ENCODE measurements at regions of chr5 and their contacts with region 1.

Region 1: DNA sequence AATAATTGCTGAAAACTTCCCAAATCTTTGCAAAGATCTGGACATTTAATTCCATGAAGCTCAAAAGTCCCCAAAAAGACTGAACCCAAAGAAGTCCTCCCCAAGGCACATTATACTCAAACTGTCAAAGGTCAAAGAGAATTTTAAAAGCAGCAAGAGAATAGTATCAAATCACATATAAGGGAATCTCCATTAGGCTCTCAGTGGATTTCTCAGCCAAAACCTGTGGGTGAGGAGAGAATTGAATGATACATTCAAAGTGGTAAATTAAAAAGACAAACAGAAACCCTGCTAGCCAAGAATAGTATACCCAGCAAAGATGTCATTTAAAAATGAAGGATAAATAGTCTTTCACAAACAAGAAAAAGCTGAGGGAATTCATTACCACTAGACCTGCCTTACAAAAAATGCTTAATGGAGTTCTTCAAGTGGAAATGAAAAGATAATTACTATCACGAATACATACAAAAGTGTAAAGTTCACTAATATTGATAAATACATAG is 134.1 kb downstream of the NDUFS4 start:
- DNase-seq: no peak
- H3K4me3 ChIP-seq: no peak overlapping the region
- H3K27ac ChIP-seq: no peak overlapping the region
- H3K4me1 ChIP-seq: no peaks in the 10 kb centered on the region
- H3K27me3 ChIP-seq: no peaks in the 10 kb centered on the region
- CTCF ChIP-seq: no peak
- POLR2A ChIP-seq: no peak

Region 2: DNA sequence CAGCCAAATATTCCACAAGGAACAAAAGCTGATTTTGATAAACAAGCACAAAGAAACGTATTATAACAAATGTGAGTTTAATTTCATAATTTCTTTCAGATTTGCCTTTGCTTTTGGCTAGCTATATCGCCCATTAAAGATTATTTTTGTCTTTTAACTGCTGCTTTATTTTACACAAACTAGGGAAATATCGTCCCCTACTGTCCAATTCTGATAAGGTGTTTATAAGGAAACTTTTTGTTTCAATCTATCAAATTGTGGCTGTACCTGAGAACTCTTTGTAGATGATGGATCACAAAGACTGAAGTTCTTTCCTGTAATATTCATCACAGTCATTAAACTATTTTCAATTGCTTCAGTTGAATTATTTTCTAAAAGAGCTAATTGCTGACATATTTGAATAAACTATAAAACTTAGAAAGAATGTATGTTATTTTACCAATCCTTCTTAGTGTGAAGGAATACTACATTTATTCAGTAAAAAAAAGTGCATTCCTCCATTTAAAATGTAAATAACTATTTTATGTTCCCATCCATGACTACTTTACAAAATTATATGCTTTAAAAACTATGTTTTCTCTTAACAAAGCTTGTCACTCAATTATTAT is 1338.2 kb before region 1 on chr5:
- intact Hi-C with region 1: loop called (anchors 5 kb)
- DNase-seq: no peak
- H3K4me3 ChIP-seq: no peak overlapping the region
- H3K27ac ChIP-seq: no peak overlapping the region
- H3K4me1 ChIP-seq: no peaks in the 10 kb centered on the region
- H3K27me3 ChIP-seq: no peaks in the 10 kb centered on the region
- CTCF ChIP-seq: peak in 1 of 3 experiments; percentile 36
- POLR2A ChIP-seq: no peak